SK-N-SH (cell line): ENCODE measurements at regions of chr15 and their contacts with region 1.

Region 1: GRCh38 chr15:72599855-72600464 is 54.5 kb upstream of the GOLGA6B start:
- DNase-seq: peak; percentile 55
- H3K4me3 ChIP-seq: no peak overlapping the region; a peak in 1 of 4 replicates
- H3K27ac ChIP-seq: no peak overlapping the region
- H3K4me1 ChIP-seq: no peaks in the 10 kb centered on the region
- H3K27me3 ChIP-seq: no peaks in the 10 kb centered on the region
- CTCF ChIP-seq: peak; percentile 85
- EP300 ChIP-seq: no peak
- RAD21 ChIP-seq: peak; percentile 70

Region 2: DNA sequence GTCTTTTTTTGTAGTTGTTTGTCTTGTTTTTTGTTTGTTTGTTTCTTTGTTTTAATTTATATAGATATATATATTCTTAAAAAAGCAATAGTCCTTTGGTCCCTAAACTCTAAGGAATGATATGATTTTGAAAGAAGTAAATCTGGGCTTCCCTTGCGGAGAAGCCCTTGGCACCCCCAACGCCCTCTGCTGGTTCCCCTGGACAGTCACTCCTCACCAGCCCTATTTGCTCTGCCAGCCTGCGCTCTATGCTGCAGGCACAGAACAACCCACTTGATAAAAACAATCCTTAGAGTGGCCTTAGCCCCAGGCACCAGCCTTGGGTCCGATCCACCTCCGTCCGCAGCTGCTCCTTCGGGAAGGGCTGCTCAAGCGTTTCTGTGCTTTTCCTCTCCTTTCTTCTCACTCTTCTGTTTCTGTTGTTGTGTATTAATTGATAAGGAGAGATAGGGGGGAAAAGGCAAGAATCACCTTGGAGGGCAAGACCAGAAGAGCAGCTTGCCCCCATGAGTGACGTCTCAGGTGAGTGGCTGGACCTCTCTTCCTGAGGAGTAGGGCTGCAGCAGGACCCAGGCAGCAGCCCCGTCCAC is 313.9 kb before region 1 on chr15:
- CTCF ChIA-PET with region 1: no interaction called
- POLR2A ChIA-PET with region 1: no interaction called
- DNase-seq: peak; percentile 41
- H3K4me3 ChIP-seq: no peak overlapping the region
- H3K27ac ChIP-seq: no peak overlapping the region
- H3K4me1 ChIP-seq: no peaks in the 10 kb centered on the region
- H3K27me3 ChIP-seq: no peaks in the 10 kb centered on the region
- CTCF ChIP-seq: peak; percentile 42
- EP300 ChIP-seq: no peak
- RAD21 ChIP-seq: peak; percentile 4; the same call in 1 of the 2 replicates

Region 3: GRCh38 chr15:72566973-72567372 is 33.0 kb before region 1 on chr15:
- CTCF ChIA-PET with region 1: interaction called, 15 read pairs
- POLR2A ChIA-PET with region 1: no interaction called
- DNase-seq: no peak
- H3K4me3 ChIP-seq: no peak overlapping the region
- H3K27ac ChIP-seq: no peak overlapping the region
- H3K4me1 ChIP-seq: no peaks in the 10 kb centered on the region; a peak in 1 of 4 replicates
- H3K27me3 ChIP-seq: no peaks in the 10 kb centered on the region
- CTCF ChIP-seq: no peak
- EP300 ChIP-seq: no peak
- RAD21 ChIP-seq: no peak

Region 4: GRCh38 chr15:72585476-72586082 is 14.4 kb before region 1 on chr15:
- CTCF ChIA-PET with region 1: interaction called, 23 read pairs
- POLR2A ChIA-PET with region 1: interaction called, 4 read pairs
- DNase-seq: no peak
- H3K4me3 ChIP-seq: no peak overlapping the region
- H3K27ac ChIP-seq: no peak overlapping the region; a peak in 1 of 4 replicates
- H3K4me1 ChIP-seq: no peaks in the 10 kb centered on the region; a peak in 1 of 4 replicates
- H3K27me3 ChIP-seq: no peaks in the 10 kb centered on the region
- CTCF ChIP-seq: peak; percentile 42
- EP300 ChIP-seq: no peak
- RAD21 ChIP-seq: peak; percentile 38

Region 5: GRCh38 chr15:72671535-72671934 is 71.6 kb after region 1 on chr15:
- CTCF ChIA-PET with region 1: interaction called, 35 read pairs
- POLR2A ChIA-PET with region 1: no interaction called
- DNase-seq: no peak
- H3K4me3 ChIP-seq: no peak overlapping the region
- H3K27ac ChIP-seq: no peak overlapping the region
- H3K4me1 ChIP-seq: peaks cover 0 to 3% of the 10 kb centered on the region in 2 experiments; a peak in 1 of 4 replicates
- H3K27me3 ChIP-seq: peaks cover 11% of the 10 kb centered on the region; the same call in 1 of the 2 replicates
- CTCF ChIP-seq: no peak
- EP300 ChIP-seq: no peak
- RAD21 ChIP-seq: no peak